ENCODE measurements at regions of chrX and their contacts with region 1.

Region 1: DNA sequence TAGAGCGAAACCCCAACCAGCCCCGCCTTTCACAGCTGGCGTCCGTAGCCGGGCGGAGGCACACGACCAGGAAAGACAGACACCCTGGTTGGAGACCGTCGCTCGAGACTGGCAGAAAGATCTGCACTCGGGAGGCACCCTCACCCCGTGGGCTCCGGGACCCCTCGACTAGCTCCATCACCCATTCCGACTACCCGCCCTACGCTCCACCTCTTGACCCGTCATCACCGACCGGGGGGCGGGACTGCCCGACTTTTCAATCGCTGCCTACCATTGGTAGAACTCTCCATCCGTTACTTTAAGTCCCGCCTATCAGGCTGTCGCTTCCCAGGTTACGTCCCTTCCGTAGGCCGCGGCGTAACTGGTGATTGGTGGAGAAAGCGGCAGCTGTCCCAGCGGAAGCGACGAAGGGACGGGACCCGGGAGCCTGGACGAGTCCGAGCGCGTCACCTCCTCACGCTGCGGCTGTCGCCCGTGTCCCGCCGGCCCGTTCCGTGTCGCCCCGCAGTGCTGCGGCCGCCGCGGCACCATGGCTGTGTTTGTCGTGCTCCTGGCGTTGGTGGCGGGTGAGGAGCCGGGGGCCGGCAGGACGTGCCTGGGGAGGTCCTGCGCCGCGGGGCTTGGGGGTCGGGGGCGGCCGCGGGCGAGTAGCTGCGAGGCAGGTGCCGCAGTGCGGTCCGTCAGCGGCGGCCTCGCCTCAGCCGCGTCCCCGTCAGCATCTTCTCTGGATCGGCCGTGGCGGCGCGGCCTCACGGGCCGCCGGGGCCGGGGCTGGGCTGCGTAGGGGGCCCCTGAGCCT is at the start of gene ATP6AP2:
- DNase-seq: peak; percentile 85
- H3K4me3 Mint-ChIP-seq: peak within 1 kb of the TSS; percentile 94
- H3K27ac Mint-ChIP-seq: peak within 1 kb of the TSS; percentile 97
- H3K4me1 Mint-ChIP-seq: peaks cover 17% of the 10 kb centered on the region
- H3K27me3 Mint-ChIP-seq: no peaks in the 10 kb centered on the region
- total RNA-seq, gene ATP6AP2: 65.4 and 67.1 TPM in 2 replicates

Region 2: DNA sequence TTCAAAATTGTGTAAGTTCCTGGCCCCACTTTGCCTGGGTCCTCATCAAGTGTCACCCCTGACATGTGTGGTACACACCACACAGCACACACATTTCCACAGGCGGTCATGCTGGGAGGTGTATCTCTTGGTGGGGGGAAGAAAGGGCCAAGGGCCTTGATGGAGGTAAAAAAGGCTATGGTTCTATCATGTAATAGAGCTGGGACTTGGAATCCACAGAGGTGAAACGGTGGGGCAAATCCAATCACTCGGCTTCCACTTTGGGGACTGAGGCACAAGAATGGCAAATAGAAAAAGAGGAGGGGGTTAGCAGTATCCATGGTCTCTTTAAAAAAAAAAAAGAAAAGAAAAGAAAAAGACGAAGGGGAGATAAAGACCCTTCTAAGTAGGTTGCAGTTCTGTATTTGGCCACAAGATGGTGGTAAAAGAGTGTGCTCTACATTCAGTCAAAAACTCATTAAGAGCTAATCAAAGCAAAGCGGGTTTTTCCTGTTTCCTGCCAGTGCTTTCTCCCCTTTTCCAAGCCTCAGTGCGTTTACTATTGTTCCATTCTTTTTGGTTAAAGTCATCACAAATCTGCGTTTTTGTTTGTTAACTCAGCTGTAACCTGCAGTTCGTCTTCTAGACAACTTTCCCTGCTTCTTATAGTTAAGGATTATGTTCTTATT is 36.9 kb before region 1 on chrX:
- intact Hi-C with region 1: loop called (anchors 2 kb)
- DNase-seq: no peak
- H3K4me3 Mint-ChIP-seq: no peak overlapping the region
- H3K27ac Mint-ChIP-seq: no peak overlapping the region
- H3K4me1 Mint-ChIP-seq: peaks cover 21% of the 10 kb centered on the region
- H3K27me3 Mint-ChIP-seq: peaks cover 6% of the 10 kb centered on the region

Region 3: GRCh38 chrX:40591126-40591525 is 10.4 kb after region 1 on chrX:
- intact Hi-C with region 1: loop called (anchors 1 kb)
- DNase-seq: no peak
- H3K4me3 Mint-ChIP-seq: no peak overlapping the region
- H3K27ac Mint-ChIP-seq: no peak overlapping the region
- H3K4me1 Mint-ChIP-seq: peaks cover 22% of the 10 kb centered on the region
- H3K27me3 Mint-ChIP-seq: no peaks in the 10 kb centered on the region

Region 4: GRCh38 chrX:40735325-40736169 is 154.8 kb after region 1 on chrX and contains the start of gene MED14:
- intact Hi-C with region 1: loop called (anchors 1 kb)
- DNase-seq: peak; percentile 82
- H3K4me3 Mint-ChIP-seq: peak within 1 kb of the TSS; percentile 87
- H3K27ac Mint-ChIP-seq: peak within 1 kb of the TSS; percentile 90
- H3K4me1 Mint-ChIP-seq: peaks cover 30% of the 10 kb centered on the region
- H3K27me3 Mint-ChIP-seq: no peaks in the 10 kb centered on the region
- total RNA-seq, gene MED14: 36.4 and 40.9 TPM in 2 replicates

Region 5: DNA sequence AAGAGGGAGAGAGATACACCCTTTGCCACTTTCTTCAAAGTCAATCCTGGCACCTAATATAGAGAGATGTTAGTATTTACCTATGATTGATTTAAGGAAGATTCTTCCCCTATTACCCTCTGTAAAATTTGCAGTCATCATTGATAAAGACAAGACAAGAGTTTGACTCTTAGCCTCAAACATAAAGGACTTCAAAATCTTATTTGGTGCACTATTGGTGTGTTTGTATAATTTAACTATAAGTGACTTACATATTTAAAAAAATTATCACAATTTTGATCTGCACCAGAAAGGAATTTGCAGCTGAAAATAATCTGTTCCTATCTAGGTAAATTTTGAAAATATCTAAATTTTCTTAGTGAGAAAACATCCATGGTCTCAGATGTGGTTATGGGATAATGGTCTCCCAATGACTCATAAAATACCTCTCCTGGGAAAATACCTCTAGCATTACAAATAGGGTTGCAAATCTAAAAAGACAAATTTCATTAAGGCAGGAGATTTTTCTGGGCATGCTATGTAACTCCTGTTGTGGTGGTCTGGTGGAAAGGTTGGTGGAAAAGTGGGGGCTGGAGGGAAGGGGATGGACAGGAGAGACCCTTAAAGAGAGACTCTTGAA is 328.2 kb after region 1 on chrX:
- intact Hi-C with region 1: no loop called
- DNase-seq: no peak
- H3K4me3 Mint-ChIP-seq: no peak overlapping the region
- H3K27ac Mint-ChIP-seq: no peak overlapping the region
- H3K4me1 Mint-ChIP-seq: no peaks in the 10 kb centered on the region
- H3K27me3 Mint-ChIP-seq: no peaks in the 10 kb centered on the region